Caco-2 (cell line): ENCODE measurements at regions of chr13 and their contacts with region 1.

Region 1: GRCh38 chr13:32310134-32310706 is 4.9 kb downstream of the ZAR1L start:
- DNase-seq: peak in 1 of 2 experiments; percentile 62
- H3K4me3 ChIP-seq: no peak overlapping the region
- H3K4me3 Mint-ChIP-seq: no peak overlapping the region
- H3K27ac Mint-ChIP-seq: no peak overlapping the region
- H3K4me1 ChIP-seq: peaks cover 23% of the 10 kb centered on the region
- H3K4me1 Mint-ChIP-seq: peaks cover 6% of the 10 kb centered on the region
- H3K27me3 ChIP-seq: no peaks in the 10 kb centered on the region
- H3K27me3 Mint-ChIP-seq: no peaks in the 10 kb centered on the region
- CTCF ChIP-seq: peak; percentile 70 to 84

Region 2: DNA sequence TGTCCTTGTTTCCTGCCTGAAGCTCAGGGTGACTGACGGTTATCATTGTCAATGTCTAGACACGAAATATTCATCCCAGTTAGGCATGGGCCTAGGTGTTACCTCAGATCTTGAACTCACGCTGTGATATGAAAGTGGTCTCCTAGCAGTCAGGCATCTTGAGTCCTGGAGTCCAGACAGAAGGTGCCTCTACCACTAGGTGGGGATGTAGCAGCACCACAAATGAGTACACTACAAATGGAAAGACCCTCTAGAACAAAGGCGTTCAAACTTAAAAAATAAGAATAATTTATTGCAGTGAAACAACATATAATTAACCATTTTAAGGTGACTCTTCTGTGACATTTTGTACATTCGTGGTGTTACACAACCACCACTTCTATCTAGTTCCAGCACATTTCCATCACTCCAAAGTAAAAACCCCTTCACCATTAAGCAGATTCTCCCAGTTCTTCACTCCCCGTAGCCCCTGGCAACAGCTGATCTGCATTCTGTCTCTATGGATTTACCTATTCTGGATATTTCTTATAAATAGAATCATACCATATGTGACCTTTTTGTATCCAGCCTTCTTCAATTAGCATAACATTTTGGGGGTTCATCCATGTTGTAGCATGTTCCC is 290.5 kb before region 1 on chr13:
- CTCF ChIA-PET with region 1: no interaction called
- POLR2A ChIA-PET with region 1: no interaction called
- intact Hi-C with region 1: loop called (anchors 1 kb)
- DNase-seq: peak; percentile 68 to 75
- H3K4me3 ChIP-seq: no peak overlapping the region
- H3K4me3 Mint-ChIP-seq: no peak overlapping the region
- H3K27ac Mint-ChIP-seq: no peak overlapping the region
- H3K4me1 ChIP-seq: no peaks in the 10 kb centered on the region
- H3K4me1 Mint-ChIP-seq: peaks cover 9% of the 10 kb centered on the region
- H3K27me3 ChIP-seq: no peaks in the 10 kb centered on the region
- H3K27me3 Mint-ChIP-seq: no peaks in the 10 kb centered on the region
- CTCF ChIP-seq: peak; percentile 87 to 95

Region 3: GRCh38 chr13:32234932-32235331 is 75.3 kb before region 1 on chr13:
- CTCF ChIA-PET with region 1: no interaction called
- POLR2A ChIA-PET with region 1: no interaction called
- intact Hi-C with region 1: no loop called
- DNase-seq: no peak
- H3K4me3 ChIP-seq: no peak overlapping the region
- H3K4me3 Mint-ChIP-seq: no peak overlapping the region
- H3K27ac Mint-ChIP-seq: no peak overlapping the region
- H3K4me1 ChIP-seq: no peaks in the 10 kb centered on the region
- H3K4me1 Mint-ChIP-seq: peaks cover 6% of the 10 kb centered on the region
- H3K27me3 ChIP-seq: no peaks in the 10 kb centered on the region
- H3K27me3 Mint-ChIP-seq: no peaks in the 10 kb centered on the region
- CTCF ChIP-seq: no peak

Region 4: GRCh38 chr13:32267836-32268439 is 42.3 kb before region 1 on chr13:
- CTCF ChIA-PET with region 1: interaction called, 3 read pairs
- POLR2A ChIA-PET with region 1: no interaction called
- intact Hi-C with region 1: loop called (anchors 1 kb)
- DNase-seq: peak; percentile 77 to 79
- H3K4me3 ChIP-seq: no peak overlapping the region
- H3K4me3 Mint-ChIP-seq: no peak overlapping the region
- H3K27ac Mint-ChIP-seq: peak overlapping the region; percentile 27
- H3K4me1 ChIP-seq: peaks cover 30% of the 10 kb centered on the region
- H3K4me1 Mint-ChIP-seq: peaks cover 15% of the 10 kb centered on the region
- H3K27me3 ChIP-seq: no peaks in the 10 kb centered on the region
- H3K27me3 Mint-ChIP-seq: no peaks in the 10 kb centered on the region
- CTCF ChIP-seq: peak; percentile 87 to 92